ENCODE measurements at regions of chrX and their contacts with region 1.

Region 1: DNA sequence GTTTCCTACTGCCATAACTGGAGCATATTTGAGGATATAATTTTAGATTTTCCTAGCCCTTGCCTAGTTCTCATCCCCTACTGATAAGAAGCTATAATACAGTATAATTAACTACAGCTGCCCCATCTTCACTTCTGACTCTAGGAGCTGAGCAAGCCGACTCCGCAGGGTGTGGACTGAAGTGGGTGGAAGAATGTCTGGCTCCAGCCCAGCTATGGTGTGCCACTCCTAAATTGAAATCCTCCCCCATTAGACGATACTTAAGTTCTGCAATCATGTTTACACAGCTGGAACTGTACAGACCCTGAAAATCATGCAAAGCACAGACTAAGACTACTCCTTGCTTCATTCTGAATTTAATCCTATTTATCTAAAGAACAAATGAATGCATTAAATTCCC is 93.1 kb downstream of the PCDH19 start:
- DNase-seq: no peak

Region 2: GRCh38 chrX:100263650-100264049 is 53.3 kb before region 1 on chrX:
- intact Hi-C with region 1: loop called in 1 of 2 experiments (anchors 2 kb)
- DNase-seq: no peak

Region 3: GRCh38 chrX:100636321-100636991 is 319.5 kb after region 1 on chrX and contains the start of gene TSPAN6:
- intact Hi-C with region 1: no loop called
- DNase-seq: peak; percentile 90
- total RNA-seq, gene TSPAN6: 7.8 to 11.1 TPM

Measured in posterior vena cava (tissue), 2 donors.